Panc1 (cell line): ENCODE measurements at regions of chr12 and their contacts with region 1.

Region 1: DNA sequence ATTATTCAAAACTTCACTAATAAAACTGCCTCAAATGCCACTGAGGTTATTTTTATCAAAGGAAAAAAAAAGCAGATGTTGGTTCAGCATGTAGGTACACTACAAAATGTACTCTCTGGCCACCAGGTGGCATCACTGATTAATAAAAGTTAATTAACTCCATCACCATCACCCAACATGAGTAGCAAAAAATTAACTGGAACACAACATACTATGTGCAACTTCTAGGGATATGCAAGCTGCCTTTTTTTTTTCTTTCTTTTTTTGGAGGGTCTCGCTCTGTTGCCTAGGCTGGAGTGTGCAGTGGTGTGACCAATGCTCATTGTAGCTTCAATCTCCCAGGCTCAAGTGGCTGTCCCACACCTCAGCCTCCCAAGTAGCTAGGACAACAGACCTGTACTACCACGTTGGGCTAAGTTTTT is 43.8 kb upstream of the NR2C1 start:
- DNase-seq: no peak
- ATAC-seq: peak; percentile 88
- H3K4me3 ChIP-seq: no peak overlapping the region
- H3K27ac ChIP-seq: peak overlapping the region; percentile 57
- H3K4me1 ChIP-seq: peaks cover 20% of the 10 kb centered on the region
- H3K27me3 ChIP-seq: no peaks in the 10 kb centered on the region
- CTCF ChIP-seq: peak; percentile 74

Region 2: DNA sequence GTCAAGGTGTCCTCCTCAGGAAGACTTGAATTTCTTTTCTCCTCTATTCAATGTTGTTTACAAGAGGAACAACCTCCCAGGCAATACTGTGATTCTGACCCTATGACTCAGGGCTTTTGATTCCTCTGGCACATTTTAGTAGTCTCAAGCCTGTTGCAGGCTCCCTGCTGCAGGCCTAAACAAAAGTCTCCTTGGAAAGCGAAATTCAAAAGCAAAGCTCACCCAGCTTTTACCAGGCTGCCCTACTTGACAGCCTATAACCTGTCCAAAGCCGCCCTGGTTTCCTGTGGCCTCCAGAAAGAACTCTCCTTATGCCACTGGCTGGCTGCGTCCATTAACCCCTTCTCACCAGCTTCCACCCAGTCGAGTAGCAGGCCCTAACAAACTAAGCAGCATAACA is 88.5 kb after region 1 on chr12:
- CTCF ChIA-PET with region 1: no interaction called
- POLR2A ChIA-PET with region 1: no interaction called
- in situ Hi-C with region 1: loop called (anchors 5 kb)
- intact Hi-C with region 1: no loop called
- DNase-seq: no peak
- ATAC-seq: peak; percentile 55
- H3K4me3 ChIP-seq: peak overlapping the region in 1 of 2 experiments; percentile 19; a peak in 1 of 4 replicates
- H3K27ac ChIP-seq: peak overlapping the region; percentile 98
- H3K4me1 ChIP-seq: peaks cover 61% of the 10 kb centered on the region
- H3K27me3 ChIP-seq: no peaks in the 10 kb centered on the region
- CTCF ChIP-seq: no peak

Region 3: DNA sequence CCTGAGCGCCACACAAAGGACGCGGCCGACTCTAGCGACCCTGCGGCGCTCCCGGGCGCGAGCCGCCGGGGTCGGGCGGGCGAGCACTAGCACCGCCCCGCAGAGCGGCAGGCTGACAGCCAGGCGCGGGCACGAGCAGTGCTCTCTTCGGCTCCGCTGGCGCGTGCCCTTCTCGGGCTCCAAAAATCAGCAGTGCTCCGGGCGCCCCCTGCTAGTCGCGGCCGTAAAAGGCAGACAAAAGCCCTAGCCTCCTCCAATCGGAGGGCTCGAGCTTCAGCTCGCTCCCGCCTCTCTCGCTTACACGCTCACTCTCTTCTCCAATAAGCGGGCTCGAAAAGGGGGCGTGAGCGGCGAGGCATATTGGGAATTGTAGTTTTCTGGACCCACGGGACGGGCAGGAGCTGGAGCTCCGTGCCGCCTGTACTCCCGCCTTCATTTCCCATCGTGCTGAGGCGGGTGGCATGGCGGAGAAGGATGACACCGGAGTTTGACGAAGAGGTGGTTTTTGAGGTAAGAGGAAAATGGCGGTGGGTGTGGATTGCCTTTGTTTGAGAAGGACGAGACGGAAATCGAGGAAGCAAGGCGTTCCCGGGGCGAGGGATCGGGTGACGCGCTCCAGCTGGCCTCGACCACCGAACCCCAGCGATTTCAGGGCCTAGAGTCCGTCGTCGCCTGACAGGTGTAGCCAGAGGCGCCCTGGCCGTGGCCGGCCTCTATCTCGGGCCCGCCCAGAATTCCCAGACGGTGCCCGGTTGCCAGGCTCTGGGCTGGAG is 100.4 kb after region 1 on chr12 and contains the starts of genes FGD6 and VEZT:
- CTCF ChIA-PET with region 1: interaction called, 4 read pairs
- POLR2A ChIA-PET with region 1: no interaction called
- in situ Hi-C with region 1: no loop called
- intact Hi-C with region 1: loop called (anchors 2 kb)
- DNase-seq: peak; percentile 96
- ATAC-seq: peak; percentile 93
- H3K4me3 ChIP-seq: peak within 1 kb of the TSS; percentile 93 to 94
- H3K27ac ChIP-seq: peak within 1 kb of the TSS; percentile 97
- H3K4me1 ChIP-seq: peaks cover 30% of the 10 kb centered on the region
- H3K27me3 ChIP-seq: no peaks in the 10 kb centered on the region
- CTCF ChIP-seq: peak; percentile 88
- total RNA-seq, gene FGD6: 28.3 TPM
- total RNA-seq, gene VEZT: 70.6 TPM

Region 4: DNA sequence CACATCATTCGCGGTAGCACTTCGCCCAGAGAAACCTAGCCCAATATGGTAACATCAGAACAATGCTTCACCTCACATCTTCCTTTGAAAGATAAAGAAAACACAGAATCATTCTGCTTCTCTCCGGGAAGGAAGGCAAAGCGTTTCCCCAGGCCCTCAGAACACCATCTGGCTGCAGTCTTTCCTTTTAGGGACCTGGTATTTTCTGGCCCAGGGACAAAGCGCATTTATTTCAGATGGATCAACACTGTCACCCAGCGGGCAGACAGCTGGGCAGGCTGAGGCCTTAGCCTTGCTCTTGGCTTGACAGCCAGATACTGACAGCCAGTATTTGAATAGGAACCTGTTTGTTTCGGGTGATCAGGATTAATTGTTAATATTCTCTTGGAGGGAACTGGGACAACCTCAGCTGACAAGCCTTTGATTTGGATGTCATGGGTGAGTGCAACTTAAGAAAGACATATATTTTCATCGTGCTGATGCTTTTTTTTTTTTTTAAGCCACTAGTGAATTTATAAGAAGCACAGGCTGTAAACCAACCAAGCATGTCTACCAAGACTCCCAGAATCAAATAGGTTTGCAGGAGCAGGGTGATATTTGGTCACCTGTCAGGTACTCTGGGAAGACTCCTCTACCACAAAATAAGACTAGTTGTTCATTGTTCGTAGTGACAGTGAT is 219.3 kb after region 1 on chr12:
- CTCF ChIA-PET with region 1: no interaction called
- POLR2A ChIA-PET with region 1: no interaction called
- in situ Hi-C with region 1: no loop called
- intact Hi-C with region 1: loop called (anchors 2 kb)
- DNase-seq: peak; percentile 42
- ATAC-seq: peak; percentile 94
- H3K4me3 ChIP-seq: no peak overlapping the region
- H3K27ac ChIP-seq: no peak overlapping the region
- H3K4me1 ChIP-seq: peaks cover 4% of the 10 kb centered on the region
- H3K27me3 ChIP-seq: no peaks in the 10 kb centered on the region
- CTCF ChIP-seq: peak; percentile 96

Region 5: GRCh38 chr12:95532851-95533250 is 415.7 kb after region 1 on chr12:
- CTCF ChIA-PET with region 1: interaction called, 10 read pairs
- POLR2A ChIA-PET with region 1: no interaction called
- in situ Hi-C with region 1: no loop called
- intact Hi-C with region 1: loop called (anchors 10 kb)
- DNase-seq: no peak
- ATAC-seq: no peak
- H3K4me3 ChIP-seq: no peak overlapping the region
- H3K27ac ChIP-seq: no peak overlapping the region
- H3K4me1 ChIP-seq: peaks cover 9% of the 10 kb centered on the region
- H3K27me3 ChIP-seq: peaks cover 3% of the 10 kb centered on the region; the same call in 1 of the 2 replicates
- CTCF ChIP-seq: no peak

Region 6: GRCh38 chr12:95918194-95918993 is 801.2 kb after region 1 on chr12:
- CTCF ChIA-PET with region 1: no interaction called
- POLR2A ChIA-PET with region 1: no interaction called
- in situ Hi-C with region 1: no loop called
- intact Hi-C with region 1: no loop called
- DNase-seq: peak; percentile 39
- ATAC-seq: peak; percentile 91
- H3K4me3 ChIP-seq: no peak overlapping the region
- H3K27ac ChIP-seq: no peak overlapping the region
- H3K4me1 ChIP-seq: no peaks in the 10 kb centered on the region
- H3K27me3 ChIP-seq: peaks cover 19% of the 10 kb centered on the region
- CTCF ChIP-seq: peak; percentile 89